Stomach (tissue), 19 donors: ENCODE measurements at regions of chr1 and their contacts with region 1.

Region 1: DNA sequence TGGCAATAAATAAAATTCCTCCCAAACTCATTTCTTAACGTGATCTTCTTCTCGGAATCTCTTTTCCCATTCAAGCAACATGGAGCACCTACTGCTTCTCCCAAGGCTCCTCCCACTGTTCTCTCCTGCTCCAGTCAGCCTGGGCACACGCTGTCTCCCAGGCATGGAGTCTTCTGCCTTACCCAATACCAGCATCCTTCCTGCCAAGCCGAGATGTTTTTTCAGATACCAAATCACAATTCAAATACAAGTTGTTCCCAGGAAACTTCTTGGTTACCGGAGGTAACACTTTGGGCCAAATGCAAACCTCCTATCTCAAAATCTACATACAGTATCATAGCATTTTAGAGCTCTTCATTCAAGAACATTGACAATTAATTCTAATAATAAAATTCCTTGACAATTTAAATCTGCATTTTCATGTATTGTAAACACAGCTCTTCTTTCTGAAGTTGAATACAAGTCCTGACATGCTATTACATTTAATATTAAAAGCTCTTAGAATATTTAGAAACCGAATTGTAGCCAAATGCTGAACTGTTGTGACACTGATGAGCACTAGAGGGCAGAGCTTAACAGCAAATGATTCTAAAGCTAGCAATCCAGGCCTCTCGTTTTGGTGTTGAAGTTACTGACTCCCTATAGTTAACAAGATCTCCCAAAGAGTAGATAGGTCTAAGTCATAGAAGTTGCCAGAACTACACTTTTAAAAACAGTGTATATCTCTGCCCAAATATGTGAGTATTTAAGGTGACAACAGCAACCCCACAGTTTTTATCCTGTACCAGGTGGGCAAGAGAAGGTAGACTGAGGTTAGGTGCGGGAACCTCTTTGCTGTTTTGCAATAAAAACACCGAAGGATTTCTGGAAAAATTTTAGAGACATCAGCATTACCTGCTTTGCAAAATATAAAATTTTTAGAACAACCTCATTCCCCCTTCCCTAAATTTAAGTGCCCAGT is 52.3 kb downstream of the BCAR3 start:
- DNase-seq: peak in 1 of 2 donors; percentile 88
- H3K4me3 ChIP-seq: no peak overlapping the region
- H3K27ac ChIP-seq: peak overlapping the region in 1 of 5 donors; percentile 19
- H3K4me1 ChIP-seq: peaks cover 0 to 26% (median 15%) of the 10 kb centered on the region in 4 donors
- H3K27me3 ChIP-seq: no peaks in the 10 kb centered on the region
- CTCF ChIP-seq: peak in 5 of 7 experiments; percentile 59 to 84 (median 81)
- EP300 ChIP-seq: no peak
- POLR2A ChIP-seq: no peak

Region 2: GRCh38 chr1:93814059-93814794 is 184.8 kb after region 1 on chr1:
- intact Hi-C with region 1: loop called (anchors 5 kb)
- DNase-seq: peak; percentile 68 to 91
- H3K4me3 ChIP-seq: no peak overlapping the region
- H3K27ac ChIP-seq: no peak overlapping the region
- H3K4me1 ChIP-seq: peaks cover 0 to 29% (median 11%) of the 10 kb centered on the region in 4 donors
- H3K27me3 ChIP-seq: no peaks in the 10 kb centered on the region
- CTCF ChIP-seq: peak in 5 of 7 experiments; percentile 89 to 98 (median 93)
- EP300 ChIP-seq: no peak
- POLR2A ChIP-seq: no peak

Region 3: DNA sequence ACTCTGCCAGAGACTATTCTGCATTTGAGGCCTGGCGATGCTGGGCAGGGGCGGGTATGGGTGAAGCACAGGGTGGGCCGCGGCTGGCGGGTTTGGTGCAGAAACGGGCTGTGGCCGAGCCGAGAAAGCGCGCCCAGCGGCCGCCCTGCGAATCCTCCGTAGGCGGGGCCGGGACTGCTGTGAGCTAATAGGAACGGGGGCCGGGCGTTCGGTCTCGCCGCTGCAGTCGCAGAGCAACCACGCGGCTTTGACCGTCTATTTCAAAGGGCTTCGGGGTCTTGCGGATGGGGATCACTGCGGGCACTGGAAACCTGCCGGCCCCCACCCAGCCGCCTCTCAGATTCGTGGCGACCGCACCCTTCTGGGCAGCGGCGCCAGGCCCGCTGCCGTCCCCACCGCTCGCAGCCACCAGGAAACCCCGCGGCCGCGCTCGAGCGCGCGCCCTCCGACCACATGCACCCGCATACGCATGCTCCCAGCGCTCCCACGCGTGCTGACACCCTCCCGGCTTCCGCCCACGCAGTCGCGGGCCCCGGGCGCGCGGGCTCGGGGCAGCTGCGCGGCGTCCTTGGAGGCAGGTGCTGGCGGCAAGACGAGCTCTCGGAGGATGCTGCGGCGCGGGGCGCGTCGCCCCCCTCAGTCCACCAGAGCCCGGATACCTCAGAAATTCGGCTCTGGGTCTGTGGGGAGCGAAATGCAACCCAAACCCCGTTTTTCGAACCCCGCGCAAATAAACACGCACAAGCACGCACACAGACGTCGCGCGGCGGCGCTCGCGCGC is 217.0 kb after region 1 on chr1:
- intact Hi-C with region 1: loop called (anchors 10 kb)
- DNase-seq: peak; percentile 89 to 96
- H3K4me3 ChIP-seq: peak overlapping the region; percentile 68 to 81 (median 72)
- H3K27ac ChIP-seq: peak overlapping the region; percentile 89 to 100 (median 99)
- H3K4me1 ChIP-seq: peaks cover 5 to 36% (median 33%) of the 10 kb centered on the region in 4 donors
- H3K27me3 ChIP-seq: no peaks in the 10 kb centered on the region
- CTCF ChIP-seq: peak in 4 of 7 experiments; percentile 9 to 44 (median 20)
- EP300 ChIP-seq: no peak
- POLR2A ChIP-seq: peak in 1 of 4 donors; percentile 20